Caco-2 (cell line): ENCODE measurements at regions of chr19 and their contacts with region 1.

Region 1: DNA sequence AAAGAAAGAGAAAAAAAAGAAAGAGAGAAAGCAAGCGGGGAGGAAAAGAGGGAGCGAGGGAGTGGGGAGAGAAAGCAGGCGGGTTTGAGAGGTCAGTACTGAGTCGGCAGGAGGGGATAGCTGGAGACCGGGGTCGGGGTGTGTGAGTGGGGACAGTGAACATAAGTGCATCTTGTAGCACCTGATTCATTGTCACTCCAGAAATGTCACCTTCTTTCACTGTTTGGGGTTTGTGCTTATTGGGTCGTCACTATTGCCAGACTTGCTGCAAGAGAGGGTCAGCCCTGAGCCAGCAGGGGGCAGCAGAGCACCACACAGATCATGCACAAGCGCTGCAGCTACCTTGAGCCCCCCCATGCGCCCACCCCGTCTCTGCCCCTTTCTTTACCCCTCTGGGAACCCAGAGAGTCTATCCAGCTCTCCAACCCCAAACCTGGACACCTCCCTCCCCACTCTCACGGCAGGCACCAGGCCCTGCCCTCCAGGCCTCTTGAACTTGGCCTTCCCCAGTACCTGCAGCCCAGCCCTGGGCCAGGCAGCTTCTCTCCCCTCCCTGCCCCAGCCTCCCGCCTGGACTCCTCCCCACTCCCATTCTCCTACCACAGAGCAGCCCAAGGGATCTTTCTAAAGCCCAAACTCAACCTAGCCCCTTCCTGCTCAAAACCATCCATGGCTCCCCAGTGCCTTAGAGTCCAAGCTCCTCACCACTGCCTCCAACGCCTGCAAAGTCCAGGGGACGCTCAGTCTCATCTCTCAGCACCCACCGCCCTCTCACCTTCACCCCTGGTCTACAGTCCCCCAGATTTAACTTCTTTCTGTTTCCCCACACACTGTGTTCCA is 9.7 kb upstream of the CEACAM16 start:
- DNase-seq: peak; percentile 85 to 89
- H3K4me3 ChIP-seq: no peak overlapping the region
- H3K4me3 Mint-ChIP-seq: peak overlapping the region; percentile 7
- H3K27ac Mint-ChIP-seq: peak overlapping the region; percentile 5
- H3K4me1 ChIP-seq: peaks cover 31% of the 10 kb centered on the region
- H3K4me1 Mint-ChIP-seq: peaks cover 24% of the 10 kb centered on the region
- H3K27me3 ChIP-seq: no peaks in the 10 kb centered on the region
- H3K27me3 Mint-ChIP-seq: no peaks in the 10 kb centered on the region
- CTCF ChIP-seq: peak; percentile 97 to 99

Region 2: DNA sequence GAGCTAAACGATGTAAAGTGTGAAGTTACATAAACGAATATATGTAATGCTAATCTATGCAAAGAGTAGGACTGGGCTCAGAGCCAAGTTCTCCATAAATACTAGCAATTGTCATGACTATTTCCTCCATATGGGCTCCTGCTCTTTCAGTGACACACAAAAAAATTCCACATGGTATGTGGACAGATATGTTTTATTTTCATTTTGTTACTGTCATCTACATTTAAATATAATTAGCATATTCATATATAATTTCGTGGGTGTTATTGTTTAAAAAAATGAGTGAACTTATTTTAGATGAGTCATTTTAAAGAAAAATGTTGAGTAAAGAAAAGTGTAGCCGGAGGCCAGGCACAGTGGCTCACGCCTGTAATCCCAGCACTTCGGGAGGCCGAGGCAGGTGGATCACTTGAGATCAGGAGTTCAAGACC is 80.9 kb before region 1 on chr19:
- CTCF ChIA-PET with region 1: no interaction called
- POLR2A ChIA-PET with region 1: no interaction called
- intact Hi-C with region 1: no loop called
- DNase-seq: no peak
- H3K4me3 ChIP-seq: no peak overlapping the region
- H3K4me3 Mint-ChIP-seq: no peak overlapping the region
- H3K27ac Mint-ChIP-seq: no peak overlapping the region
- H3K4me1 ChIP-seq: peaks cover 41% of the 10 kb centered on the region
- H3K4me1 Mint-ChIP-seq: peaks cover 41% of the 10 kb centered on the region
- H3K27me3 ChIP-seq: no peaks in the 10 kb centered on the region
- H3K27me3 Mint-ChIP-seq: no peaks in the 10 kb centered on the region
- CTCF ChIP-seq: no peak

Region 3: GRCh38 chr19:44746946-44747738 is 57.9 kb after region 1 on chr19:
- CTCF ChIA-PET with region 1: interaction called, 3 read pairs
- POLR2A ChIA-PET with region 1: no interaction called
- intact Hi-C with region 1: loop called (anchors 2 kb)
- DNase-seq: peak; percentile 95 to 96
- H3K4me3 ChIP-seq: peak overlapping the region; percentile 61
- H3K4me3 Mint-ChIP-seq: peak overlapping the region; percentile 87
- H3K27ac Mint-ChIP-seq: peak overlapping the region; percentile 63
- H3K4me1 ChIP-seq: peaks cover 48% of the 10 kb centered on the region
- H3K4me1 Mint-ChIP-seq: peaks cover 30% of the 10 kb centered on the region
- H3K27me3 ChIP-seq: no peaks in the 10 kb centered on the region
- H3K27me3 Mint-ChIP-seq: no peaks in the 10 kb centered on the region
- CTCF ChIP-seq: no peak